HEK293 (cell line): ENCODE measurements at regions of chr19 and their contacts with region 1.

Region 1: GRCh38 chr19:9586764-9587163 is 2.5 kb upstream of the ZNF121 start:
- H3K4me3 ChIP-seq: no peak overlapping the region
- H3K27ac ChIP-seq: no peak overlapping the region
- H3K4me1 ChIP-seq: no peaks in the 10 kb centered on the region
- CTCF ChIP-seq: no peak

Region 2: DNA sequence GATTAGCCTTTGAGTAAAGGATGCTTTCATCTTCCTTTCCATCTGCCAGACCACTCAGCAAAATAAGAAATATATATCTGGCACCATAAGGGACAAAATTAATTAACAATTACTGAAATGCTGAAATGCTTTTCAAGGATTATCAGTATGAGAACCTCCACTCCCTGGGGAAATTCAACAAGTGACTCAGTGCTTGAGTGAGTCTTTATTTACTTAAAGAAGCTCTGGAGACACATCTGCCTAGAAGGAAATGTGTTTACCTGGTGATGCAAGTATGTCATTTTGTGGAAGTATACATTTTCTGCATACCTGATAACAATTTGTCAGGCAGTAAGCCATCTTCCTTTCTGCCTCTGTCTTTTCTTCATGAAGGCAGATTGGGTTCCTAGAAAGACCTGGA is 111.8 kb before region 1 on chr19:
- CTCF ChIA-PET with region 1: no interaction called
- POLR2A ChIA-PET with region 1: no interaction called
- H3K4me3 ChIP-seq: no peak overlapping the region
- H3K27ac ChIP-seq: no peak overlapping the region
- H3K4me1 ChIP-seq: no peaks in the 10 kb centered on the region
- CTCF ChIP-seq: no peak

Region 3: DNA sequence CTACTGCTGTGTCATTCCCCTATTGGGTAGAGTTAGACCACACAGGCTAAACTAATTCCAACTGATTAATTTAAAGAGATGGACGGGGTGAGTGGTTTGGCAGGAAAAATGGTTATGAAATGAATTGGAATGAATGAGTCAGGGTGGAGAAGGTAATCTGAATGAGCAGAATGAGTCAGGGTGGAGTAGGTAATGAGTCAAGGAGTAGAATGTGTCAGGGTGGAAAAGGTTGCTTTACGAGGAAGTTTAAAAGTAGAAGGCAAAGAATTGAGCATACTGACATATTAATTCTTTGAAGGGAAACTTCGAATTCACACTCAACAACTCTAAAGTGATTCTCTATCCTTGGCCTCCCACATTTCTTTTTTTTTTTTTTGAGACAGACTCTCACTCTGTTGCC is 10.3 kb after region 1 on chr19:
- CTCF ChIA-PET with region 1: interaction called, 19 read pairs
- POLR2A ChIA-PET with region 1: interaction called, 3 read pairs
- H3K4me3 ChIP-seq: no peak overlapping the region
- H3K27ac ChIP-seq: no peak overlapping the region
- H3K4me1 ChIP-seq: no peaks in the 10 kb centered on the region
- CTCF ChIP-seq: no peak